Posterior vena cava (tissue), 2 donors: ENCODE measurements at regions of chr20 and their contacts with region 1.

Region 1: DNA sequence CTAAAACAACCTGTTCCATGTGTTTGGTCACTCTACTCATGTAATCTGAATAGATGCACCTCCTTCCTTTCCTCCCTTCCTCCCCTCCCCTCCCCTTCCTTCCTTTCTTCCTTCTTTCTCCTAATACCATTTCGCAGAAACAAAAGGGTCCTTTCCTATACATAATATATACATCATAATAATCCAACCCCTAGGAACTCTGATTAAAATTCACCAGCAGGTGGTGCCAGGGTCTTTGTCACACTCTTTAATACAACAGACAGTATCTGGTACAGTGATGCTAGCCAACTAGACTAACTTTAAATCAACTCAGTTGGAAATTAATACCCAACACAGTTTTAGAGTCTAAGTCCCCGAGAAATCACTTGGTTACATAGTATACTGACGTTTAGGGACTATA is 181.2 kb upstream of the SHLD1 start:
- DNase-seq: no peak

Region 2: DNA sequence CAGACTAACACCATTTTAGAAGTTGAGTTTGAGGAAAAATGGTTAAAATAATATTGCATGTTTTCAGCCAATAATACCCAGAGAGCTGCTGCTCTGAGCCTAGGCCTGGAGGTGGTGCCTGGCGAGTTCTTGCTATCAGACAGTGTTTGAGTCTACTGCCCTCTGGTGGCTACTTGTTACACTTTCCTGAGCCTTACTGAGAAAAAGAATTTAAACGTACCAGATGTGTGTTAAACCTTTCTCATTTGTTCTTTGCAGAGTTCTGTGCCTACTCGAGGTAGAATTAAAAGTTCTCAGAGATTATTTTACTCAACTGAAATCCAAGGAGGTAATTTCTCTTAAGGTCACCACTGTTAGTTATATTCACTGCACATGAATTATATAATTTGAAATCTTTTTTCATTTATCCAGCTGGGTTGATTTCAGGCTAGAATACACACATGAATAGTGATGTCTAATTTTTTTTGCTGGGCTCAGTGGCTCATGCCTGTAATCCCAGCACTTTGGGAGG is 219.4 kb after region 1 on chr20:
- intact Hi-C with region 1: loop called in 1 of 2 experiments (anchors 10 kb)
- DNase-seq: peak; percentile 86